ENCODE measurements at regions of chrX and their contacts with region 1.

Region 1: GRCh38 chrX:45769761-45770582 is 569.3 kb upstream of the DIPK2B start:
- DNase-seq: peak; percentile 83
- H3K4me3 Mint-ChIP-seq: peak overlapping the region; percentile 74
- H3K27ac Mint-ChIP-seq: peak overlapping the region; percentile 85
- H3K4me1 Mint-ChIP-seq: peaks cover 2% of the 10 kb centered on the region
- H3K27me3 Mint-ChIP-seq: peaks cover 74% of the 10 kb centered on the region
- CTCF ChIP-seq: no peak

Region 2: GRCh38 chrX:45322382-45322781 is 447.6 kb before region 1 on chrX:
- CTCF ChIA-PET with region 1: interaction called, 3 read pairs
- POLR2A ChIA-PET with region 1: no interaction called
- intact Hi-C with region 1: loop called (anchors 5 kb)
- DNase-seq: peak; percentile 77
- H3K4me3 Mint-ChIP-seq: no peak overlapping the region
- H3K27ac Mint-ChIP-seq: no peak overlapping the region
- H3K4me1 Mint-ChIP-seq: no peaks in the 10 kb centered on the region
- H3K27me3 Mint-ChIP-seq: peaks cover 68% of the 10 kb centered on the region
- CTCF ChIP-seq: peak; percentile 63

Region 3: GRCh38 chrX:45621376-45622041 is 148.5 kb before region 1 on chrX:
- CTCF ChIA-PET with region 1: no interaction called
- POLR2A ChIA-PET with region 1: interaction called, 22 read pairs
- intact Hi-C with region 1: no loop called
- DNase-seq: peak; percentile 65
- H3K4me3 Mint-ChIP-seq: no peak overlapping the region
- H3K27ac Mint-ChIP-seq: peak overlapping the region; percentile 86
- H3K4me1 Mint-ChIP-seq: peaks cover 18% of the 10 kb centered on the region
- H3K27me3 Mint-ChIP-seq: peaks cover 28% of the 10 kb centered on the region
- CTCF ChIP-seq: no peak

Region 4: DNA sequence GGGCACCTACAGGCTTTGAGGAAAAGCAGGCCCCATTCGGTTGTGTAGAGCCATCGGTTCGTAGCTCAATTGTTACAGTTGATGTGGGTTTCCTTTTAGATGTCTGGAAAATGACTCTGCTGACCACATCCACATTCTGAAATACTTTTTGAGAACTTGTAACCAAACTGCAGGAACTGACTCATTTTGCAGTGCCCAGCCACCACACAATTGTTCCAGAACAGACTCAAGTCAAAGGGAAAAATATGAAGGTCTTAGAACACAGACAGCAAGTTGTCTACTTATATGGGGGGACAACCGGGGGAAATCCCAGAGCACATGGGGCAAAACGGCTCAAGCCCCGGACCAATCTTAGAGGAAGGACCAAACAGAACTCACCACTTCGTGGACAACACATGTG is 11.7 kb before region 1 on chrX:
- CTCF ChIA-PET with region 1: interaction called, 4 read pairs
- POLR2A ChIA-PET with region 1: interaction called, 408 read pairs
- intact Hi-C with region 1: no loop called
- DNase-seq: peak; percentile 68
- H3K4me3 Mint-ChIP-seq: peak overlapping the region; percentile 45
- H3K27ac Mint-ChIP-seq: peak overlapping the region; percentile 77
- H3K4me1 Mint-ChIP-seq: peaks cover 35% of the 10 kb centered on the region
- H3K27me3 Mint-ChIP-seq: peaks cover 25% of the 10 kb centered on the region
- CTCF ChIP-seq: no peak

Region 5: DNA sequence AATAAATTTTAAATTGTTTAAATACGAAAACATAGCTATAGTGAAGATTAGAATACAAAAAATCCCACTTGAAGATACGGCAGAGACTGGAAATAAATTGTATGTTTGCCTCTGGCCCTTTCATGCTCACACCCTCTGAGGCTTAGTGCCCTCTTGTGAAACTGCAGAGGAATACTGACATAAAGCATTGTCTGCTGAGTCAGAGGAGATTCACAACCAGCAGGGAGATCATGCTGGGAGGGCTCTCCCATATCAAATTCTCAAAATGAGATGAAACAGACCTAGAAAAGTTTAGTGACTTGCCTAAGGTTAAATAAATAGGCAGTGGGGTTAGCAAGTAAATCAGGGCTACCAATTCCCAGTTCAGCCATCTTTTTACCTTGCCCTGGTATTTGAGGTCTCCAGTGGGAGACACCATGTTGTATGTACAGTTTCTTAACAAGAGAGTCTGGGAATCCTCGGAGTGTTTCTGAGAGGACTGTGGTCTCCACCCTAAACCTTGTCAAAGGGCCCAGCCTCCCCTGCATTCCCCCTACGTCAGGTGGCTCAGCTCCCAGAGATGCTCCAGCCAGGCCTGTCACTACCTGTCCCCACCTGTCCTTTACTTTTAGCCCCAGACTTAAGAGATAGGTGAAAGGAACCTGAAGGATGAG is 12.1 kb after region 1 on chrX:
- CTCF ChIA-PET with region 1: interaction called, 5 read pairs
- POLR2A ChIA-PET with region 1: interaction called, 38 read pairs
- intact Hi-C with region 1: no loop called
- DNase-seq: peak; percentile 71
- H3K4me3 Mint-ChIP-seq: no peak overlapping the region
- H3K27ac Mint-ChIP-seq: peak overlapping the region; percentile 60
- H3K4me1 Mint-ChIP-seq: peaks cover 47% of the 10 kb centered on the region
- H3K27me3 Mint-ChIP-seq: peaks cover 80% of the 10 kb centered on the region
- CTCF ChIP-seq: peak; percentile 16

Region 6: DNA sequence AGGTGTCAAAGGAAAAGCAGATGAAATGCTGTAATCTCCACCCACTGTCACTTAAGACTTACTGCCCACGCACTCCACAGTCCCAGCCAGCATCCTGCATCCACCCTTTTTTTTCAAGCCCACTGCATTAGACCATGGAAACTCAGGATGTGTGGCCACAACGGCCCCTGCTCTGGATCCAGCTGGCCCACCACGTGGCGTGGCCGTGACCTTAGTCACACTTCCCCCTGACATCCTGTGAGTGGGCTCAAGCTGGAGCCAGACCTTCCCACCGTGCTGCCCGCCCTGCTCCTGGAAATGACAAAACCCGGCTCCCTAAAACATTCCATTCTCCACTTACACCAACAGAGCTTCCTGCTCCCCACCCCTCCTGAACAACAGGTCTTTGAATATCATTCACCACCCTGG is 19.0 kb after region 1 on chrX:
- CTCF ChIA-PET with region 1: interaction called, 3 read pairs
- POLR2A ChIA-PET with region 1: interaction called, 32 read pairs
- intact Hi-C with region 1: no loop called
- DNase-seq: no peak
- H3K4me3 Mint-ChIP-seq: peak overlapping the region; percentile 68
- H3K27ac Mint-ChIP-seq: peak overlapping the region; percentile 95
- H3K4me1 Mint-ChIP-seq: peaks cover 18% of the 10 kb centered on the region
- H3K27me3 Mint-ChIP-seq: peaks cover 75% of the 10 kb centered on the region
- CTCF ChIP-seq: no peak

Region 7: DNA sequence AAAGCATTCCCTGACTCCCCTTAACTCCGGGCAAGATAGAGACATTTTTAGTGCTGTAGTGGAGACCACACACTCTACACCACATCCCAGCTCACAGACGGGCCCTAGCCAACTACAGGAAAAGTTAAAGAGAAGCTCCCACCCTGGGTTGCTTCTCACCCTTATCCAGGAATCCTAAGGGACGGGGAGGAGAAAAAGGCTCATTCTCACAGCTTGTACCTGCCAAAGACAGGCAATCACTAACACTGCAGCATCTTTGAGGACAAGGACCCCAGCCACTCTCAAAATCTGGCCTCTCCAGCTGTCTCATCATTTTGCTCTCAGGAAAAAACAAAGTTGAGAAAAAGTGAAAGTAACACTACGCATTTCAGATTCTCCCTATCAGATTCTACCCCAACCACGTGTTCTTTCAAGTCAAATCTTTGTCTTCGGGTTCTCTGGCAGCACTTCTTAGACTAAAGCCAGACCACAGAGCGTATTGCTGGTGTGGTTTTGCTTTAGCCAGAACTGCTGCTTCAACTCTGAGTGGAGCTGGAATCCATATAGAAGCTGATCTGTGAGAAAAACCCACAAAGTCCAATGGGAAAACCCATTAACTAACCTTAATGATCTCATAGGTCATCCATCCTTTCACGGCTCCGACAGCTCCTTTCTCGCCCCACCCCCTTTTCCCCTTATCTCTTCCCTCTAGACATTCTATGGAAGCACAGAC is 36.6 kb after region 1 on chrX:
- CTCF ChIA-PET with region 1: interaction called, 5 read pairs
- POLR2A ChIA-PET with region 1: interaction called, 88 read pairs
- intact Hi-C with region 1: loop called (anchors 2 kb)
- DNase-seq: peak; percentile 24
- H3K4me3 Mint-ChIP-seq: peak overlapping the region; percentile 66
- H3K27ac Mint-ChIP-seq: peak overlapping the region; percentile 89
- H3K4me1 Mint-ChIP-seq: peaks cover 19% of the 10 kb centered on the region
- H3K27me3 Mint-ChIP-seq: peaks cover 58% of the 10 kb centered on the region
- CTCF ChIP-seq: no peak